Activated CD4-positive, alpha-beta T cell treated with anti-CD3 and anti-CD28 coated beads for 36 hours (primary cell): ENCODE measurements at regions of chr4 and their contacts with region 1.

Region 1: DNA sequence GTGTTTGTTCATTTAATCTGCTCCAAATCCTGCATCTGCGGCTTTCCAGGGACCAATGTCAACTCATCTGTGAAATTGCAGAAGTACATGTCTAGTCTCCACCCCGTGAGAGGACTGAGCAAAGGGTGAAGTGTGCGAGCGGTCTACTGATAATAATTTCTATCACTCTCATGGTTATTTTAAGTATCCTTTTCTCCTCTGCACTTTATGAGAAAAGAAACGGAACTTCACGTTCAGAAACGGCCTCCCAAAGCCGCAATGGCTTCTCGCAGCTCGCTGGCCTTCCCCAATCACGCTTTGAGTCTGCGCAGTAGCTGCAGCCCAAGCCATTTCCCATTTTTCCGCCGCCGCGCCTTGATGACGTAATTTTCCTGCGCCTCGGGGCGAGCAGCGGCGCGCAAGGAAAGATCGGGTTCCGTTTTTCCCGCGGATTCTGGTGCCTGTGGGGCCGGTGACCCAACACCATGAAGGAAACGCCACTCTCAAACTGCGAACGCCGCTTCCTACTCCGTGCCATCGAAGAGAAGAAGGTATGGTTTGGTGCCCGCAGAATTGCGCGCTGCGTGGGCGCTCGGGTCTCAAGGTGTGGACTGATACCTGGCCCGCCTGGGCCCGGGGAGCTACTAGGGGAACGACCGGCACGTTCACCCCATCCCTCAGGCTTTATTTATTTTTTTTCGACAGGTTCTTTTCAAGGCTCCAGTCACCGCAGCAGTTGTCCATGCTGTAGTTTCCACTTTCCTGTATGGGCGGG is at the start of gene EXOSC9:
- DNase-seq: peak; percentile 95
- ATAC-seq: peak; percentile 85
- H3K4me3 Mint-ChIP-seq: peak within 1 kb of the TSS; percentile 93
- H3K27ac Mint-ChIP-seq: peak within 1 kb of the TSS; percentile 99
- H3K4me1 Mint-ChIP-seq: peaks cover 45% of the 10 kb centered on the region
- H3K27me3 Mint-ChIP-seq: no peaks in the 10 kb centered on the region
- total RNA-seq, gene EXOSC9: 85.4 to 94.5 TPM

Region 2: DNA sequence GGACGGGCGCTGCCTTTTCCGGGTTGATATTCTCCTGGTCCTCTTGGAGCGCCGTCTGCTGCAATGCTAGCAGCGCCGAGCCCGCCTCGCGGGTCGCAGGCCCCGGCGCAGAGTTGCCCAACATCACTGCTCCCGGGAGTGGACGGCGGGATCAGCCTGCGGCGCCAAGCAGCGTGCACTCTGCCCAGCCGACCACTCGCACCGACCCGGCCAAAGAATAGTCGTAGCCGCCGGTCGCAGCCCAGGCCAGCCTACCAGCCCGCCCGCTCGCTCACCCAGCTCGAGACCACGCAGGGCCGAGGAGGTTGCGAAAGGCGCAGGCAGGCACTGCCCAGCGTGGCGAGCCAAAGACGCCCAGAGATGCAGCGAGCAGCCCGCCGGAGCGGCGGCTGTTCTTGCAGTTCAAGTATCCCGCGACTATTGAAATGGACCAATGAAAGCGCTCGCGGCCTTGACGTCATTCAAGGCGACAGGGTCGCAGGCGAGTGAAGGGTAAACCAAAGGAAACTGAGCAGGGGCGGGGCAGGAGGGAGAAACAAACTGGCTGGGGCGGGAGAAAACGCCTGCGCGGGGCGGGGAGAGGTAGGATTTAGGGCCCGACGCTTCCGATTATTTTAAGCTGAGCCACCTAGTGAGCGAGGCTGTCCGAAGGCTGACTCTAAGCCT is 22.5 kb after region 1 on chr4 and contains the start of gene CCNA2:
- CTCF ChIA-PET with region 1: interaction called, 6 read pairs
- POLR2A ChIA-PET with region 1: interaction called, 6 read pairs
- intact Hi-C with region 1: loop called (anchors 1 kb)
- DNase-seq: peak; percentile 98
- ATAC-seq: peak; percentile 97
- H3K4me3 Mint-ChIP-seq: peak within 1 kb of the TSS; percentile 97
- H3K27ac Mint-ChIP-seq: peak within 1 kb of the TSS; percentile 88
- H3K4me1 Mint-ChIP-seq: peaks cover 16% of the 10 kb centered on the region
- H3K27me3 Mint-ChIP-seq: no peaks in the 10 kb centered on the region
- total RNA-seq, gene CCNA2: 113 to 118 TPM

Region 3: GRCh38 chr4:121869841-121870656 is 68.9 kb after region 1 on chr4 and contains the start of gene BBS7:
- CTCF ChIA-PET with region 1: no interaction called
- POLR2A ChIA-PET with region 1: no interaction called
- intact Hi-C with region 1: loop called in 1 of 2 experiments (anchors 1 kb)
- DNase-seq: peak; percentile 98
- ATAC-seq: peak; percentile 99
- H3K4me3 Mint-ChIP-seq: peak within 1 kb of the TSS; percentile 91
- H3K27ac Mint-ChIP-seq: peak within 1 kb of the TSS; percentile 83
- H3K4me1 Mint-ChIP-seq: peaks cover 17% of the 10 kb centered on the region
- H3K27me3 Mint-ChIP-seq: peaks cover 6% of the 10 kb centered on the region
- total RNA-seq, gene BBS7: 15.0 to 16.3 TPM